PC-3 (cell line): ENCODE measurements at regions of chr11 and their contacts with region 1.

Region 1: DNA sequence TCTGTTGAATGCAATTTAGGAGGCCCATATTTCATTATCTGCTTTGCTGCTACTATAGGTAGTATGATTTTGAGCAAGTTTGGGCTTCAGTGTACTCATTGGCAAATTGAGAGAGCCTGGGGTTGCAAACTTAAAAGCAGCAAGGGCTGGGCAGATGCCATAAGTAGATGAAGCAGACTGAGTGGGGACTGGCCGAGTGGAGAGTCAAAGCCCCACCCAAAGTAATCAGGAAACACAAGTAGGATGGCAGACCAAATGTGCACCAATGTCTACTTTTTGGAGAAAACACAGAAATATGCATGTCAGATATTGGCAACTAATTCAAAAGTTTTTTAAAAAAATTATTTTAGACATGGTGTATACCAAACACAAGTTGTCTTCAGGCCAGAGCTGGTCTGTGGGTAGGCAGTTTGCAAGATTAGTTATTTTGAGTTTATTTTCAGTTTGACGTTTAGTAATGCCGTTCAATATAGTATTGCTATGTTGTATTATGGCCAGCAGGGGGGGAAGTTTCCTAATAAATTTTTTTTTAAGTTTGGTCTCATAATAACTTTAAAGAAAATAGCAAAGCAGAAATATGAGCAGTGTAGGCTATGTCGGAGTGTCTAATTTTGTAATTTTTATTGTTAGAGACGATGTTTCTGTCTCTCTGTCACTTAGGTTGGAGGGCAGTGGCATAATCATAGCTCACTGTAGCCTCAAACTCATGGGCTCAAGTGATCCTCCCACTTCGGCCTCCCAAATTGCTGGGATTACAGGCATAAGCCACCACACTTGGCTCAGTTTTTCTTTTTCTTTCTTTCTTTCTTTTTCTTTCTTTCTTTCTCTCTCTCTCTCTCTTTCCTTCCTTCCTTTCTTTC is 105.1 kb downstream of the HIPK3 start:
- DNase-seq: peak; percentile 71
- ATAC-seq: peak; percentile 53
- H3K4me3 ChIP-seq: no peak overlapping the region
- H3K27ac ChIP-seq: no peak overlapping the region
- H3K4me1 ChIP-seq: no peaks in the 10 kb centered on the region
- H3K27me3 ChIP-seq: no peaks in the 10 kb centered on the region
- CTCF ChIP-seq: peak; percentile 76

Region 2: GRCh38 chr11:33531743-33532181 is 169.5 kb after region 1 on chr11:
- CTCF ChIA-PET with region 1: no interaction called
- POLR2A ChIA-PET with region 1: no interaction called
- intact Hi-C with region 1: loop called (anchors 5 kb)
- DNase-seq: no peak
- ATAC-seq: no peak
- H3K4me3 ChIP-seq: no peak overlapping the region
- H3K27ac ChIP-seq: no peak overlapping the region
- H3K4me1 ChIP-seq: peaks cover 22% of the 10 kb centered on the region
- H3K27me3 ChIP-seq: no peaks in the 10 kb centered on the region
- CTCF ChIP-seq: no peak

Region 3: GRCh38 chr11:33829433-33830141 is 467.3 kb after region 1 on chr11:
- CTCF ChIA-PET with region 1: interaction called, 3 read pairs
- POLR2A ChIA-PET with region 1: no interaction called
- intact Hi-C with region 1: loop called (anchors 1 kb)
- DNase-seq: peak; percentile 83
- ATAC-seq: peak; percentile 70
- H3K4me3 ChIP-seq: peak overlapping the region; percentile 70
- H3K27ac ChIP-seq: no peak overlapping the region
- H3K4me1 ChIP-seq: peaks cover 27% of the 10 kb centered on the region
- H3K27me3 ChIP-seq: no peaks in the 10 kb centered on the region
- CTCF ChIP-seq: peak; percentile 87